GM12878 (cell line): ENCODE measurements at regions of chr5 and their contacts with region 1.

Region 1: DNA sequence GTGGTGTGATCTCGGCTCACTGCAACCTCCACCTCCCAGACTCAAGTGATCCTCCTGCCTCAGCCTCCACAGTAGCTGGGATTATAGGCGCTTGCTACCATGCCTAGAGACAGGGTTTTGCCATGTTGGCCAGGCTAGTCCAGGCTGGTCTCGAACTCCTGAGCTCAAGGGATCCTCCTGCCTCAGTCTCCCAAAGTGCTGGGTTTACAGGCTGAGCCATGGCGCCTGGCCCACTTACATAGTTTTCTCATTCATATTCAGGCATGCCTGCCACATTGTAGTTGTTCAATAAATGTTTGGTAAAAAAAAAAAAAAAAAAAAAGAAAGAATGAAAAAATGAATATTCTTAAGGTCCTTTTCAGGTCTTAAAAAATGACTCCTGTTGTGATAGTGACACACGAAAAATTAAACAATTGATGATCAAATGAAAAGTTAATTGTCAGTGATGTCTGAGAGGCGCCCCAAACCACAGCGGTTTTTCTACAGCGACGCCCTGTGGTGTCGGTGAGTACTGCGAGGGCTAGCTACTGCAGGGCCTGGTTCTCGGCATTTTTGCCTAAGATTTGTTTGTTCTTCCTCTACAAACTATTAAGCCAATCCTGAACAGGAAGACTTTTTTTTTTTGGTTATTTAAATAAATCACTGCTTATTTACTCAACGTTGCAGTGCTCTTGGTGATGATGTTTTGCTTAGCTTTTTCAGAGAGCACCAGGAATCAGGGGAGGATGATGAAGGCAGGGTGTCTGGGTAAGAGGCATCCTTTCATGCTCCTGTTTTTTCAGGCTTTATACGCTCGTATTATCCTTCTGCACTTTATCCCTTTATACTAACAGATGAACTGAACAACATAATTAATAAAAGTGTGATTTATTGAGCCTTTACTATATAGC is 67.0 kb upstream of the DPYSL3 start:
- DNase-seq: no peak
- ATAC-seq: peak; percentile 89
- H3K4me3 ChIP-seq: no peak overlapping the region
- H3K27ac ChIP-seq: no peak overlapping the region
- H3K4me1 ChIP-seq: no peaks in the 10 kb centered on the region
- H3K27me3 ChIP-seq: no peaks in the 10 kb centered on the region
- CTCF ChIP-seq: peak; percentile 75 to 81 (median 81)
- EP300 ChIP-seq: no peak
- POLR2A ChIP-seq: no peak
- RAD21 ChIP-seq: peak; percentile 50; the same call in 1 of the 2 replicates

Region 2: GRCh38 chr5:147216552-147217154 is 360.2 kb before region 1 on chr5:
- CTCF ChIA-PET with region 1: no interaction called
- POLR2A ChIA-PET with region 1: no interaction called
- RAD21 ChIA-PET with region 1: no interaction called
- SMC1A ChIA-PET with region 1: no interaction called
- in situ Hi-C with region 1: loop called (anchors 10 kb)
- intact Hi-C with region 1: loop called (anchors 5 kb)
- DNase-seq: no peak
- ATAC-seq: no peak
- H3K4me3 ChIP-seq: no peak overlapping the region
- H3K27ac ChIP-seq: no peak overlapping the region
- H3K4me1 ChIP-seq: no peaks in the 10 kb centered on the region
- H3K27me3 ChIP-seq: no peaks in the 10 kb centered on the region; a peak in 1 of 4 replicates
- CTCF ChIP-seq: no peak
- EP300 ChIP-seq: no peak
- POLR2A ChIP-seq: no peak
- RAD21 ChIP-seq: no peak

Region 3: GRCh38 chr5:147223948-147224791 is 352.7 kb before region 1 on chr5:
- CTCF ChIA-PET with region 1: interaction called, 12 read pairs
- POLR2A ChIA-PET with region 1: no interaction called
- RAD21 ChIA-PET with region 1: interaction called, 3 read pairs
- SMC1A ChIA-PET with region 1: interaction called, 3 read pairs
- in situ Hi-C with region 1: loop called (anchors 10 kb)
- intact Hi-C with region 1: loop called (anchors 5 kb)
- DNase-seq: no peak
- ATAC-seq: peak; percentile 86
- H3K4me3 ChIP-seq: no peak overlapping the region
- H3K27ac ChIP-seq: no peak overlapping the region
- H3K4me1 ChIP-seq: no peaks in the 10 kb centered on the region
- H3K27me3 ChIP-seq: no peaks in the 10 kb centered on the region
- CTCF ChIP-seq: peak; percentile 36 to 58 (median 39); a peak in 5 of 6 replicates
- EP300 ChIP-seq: no peak
- POLR2A ChIP-seq: no peak
- RAD21 ChIP-seq: peak; percentile 56

Region 4: DNA sequence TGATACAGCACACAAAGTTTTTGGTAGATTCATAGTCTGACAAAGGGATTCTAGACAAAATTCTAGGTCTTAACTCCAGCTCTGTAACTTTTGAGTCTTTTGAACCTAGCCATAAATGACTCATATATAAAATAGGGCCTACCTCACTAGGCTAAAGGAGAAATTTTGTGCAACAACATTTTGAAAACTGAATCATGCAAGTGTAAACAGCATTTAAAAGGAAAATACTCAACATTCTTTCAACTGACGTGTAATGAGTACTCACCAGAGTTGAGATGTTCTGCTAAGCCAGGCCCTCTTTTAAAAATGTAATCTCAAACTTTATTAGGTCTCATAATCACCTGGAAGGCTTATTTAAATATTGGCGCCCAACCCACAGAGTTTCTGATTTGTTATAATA is 228.8 kb before region 1 on chr5:
- CTCF ChIA-PET with region 1: no interaction called
- POLR2A ChIA-PET with region 1: no interaction called
- RAD21 ChIA-PET with region 1: no interaction called
- SMC1A ChIA-PET with region 1: no interaction called
- in situ Hi-C with region 1: no loop called
- intact Hi-C with region 1: no loop called
- DNase-seq: no peak
- ATAC-seq: no peak
- H3K4me3 ChIP-seq: no peak overlapping the region
- H3K27ac ChIP-seq: no peak overlapping the region
- H3K4me1 ChIP-seq: no peaks in the 10 kb centered on the region
- H3K27me3 ChIP-seq: no peaks in the 10 kb centered on the region
- CTCF ChIP-seq: no peak
- EP300 ChIP-seq: no peak
- POLR2A ChIP-seq: no peak
- RAD21 ChIP-seq: no peak

Region 5: GRCh38 chr5:147391781-147392180 is 185.1 kb before region 1 on chr5:
- CTCF ChIA-PET with region 1: interaction called, 11 read pairs
- POLR2A ChIA-PET with region 1: no interaction called
- RAD21 ChIA-PET with region 1: no interaction called
- SMC1A ChIA-PET with region 1: interaction called, 4 read pairs
- in situ Hi-C with region 1: no loop called
- intact Hi-C with region 1: no loop called
- DNase-seq: no peak
- ATAC-seq: peak; percentile 97
- H3K4me3 ChIP-seq: no peak overlapping the region
- H3K27ac ChIP-seq: no peak overlapping the region
- H3K4me1 ChIP-seq: no peaks in the 10 kb centered on the region
- H3K27me3 ChIP-seq: peaks cover 0 to 3% of the 10 kb centered on the region in 2 experiments; a peak in 3 of 4 replicates
- CTCF ChIP-seq: peak; percentile 45 to 59 (median 53); a peak in 5 of 6 replicates
- EP300 ChIP-seq: no peak
- POLR2A ChIP-seq: no peak
- RAD21 ChIP-seq: peak; percentile 40

Region 6: DNA sequence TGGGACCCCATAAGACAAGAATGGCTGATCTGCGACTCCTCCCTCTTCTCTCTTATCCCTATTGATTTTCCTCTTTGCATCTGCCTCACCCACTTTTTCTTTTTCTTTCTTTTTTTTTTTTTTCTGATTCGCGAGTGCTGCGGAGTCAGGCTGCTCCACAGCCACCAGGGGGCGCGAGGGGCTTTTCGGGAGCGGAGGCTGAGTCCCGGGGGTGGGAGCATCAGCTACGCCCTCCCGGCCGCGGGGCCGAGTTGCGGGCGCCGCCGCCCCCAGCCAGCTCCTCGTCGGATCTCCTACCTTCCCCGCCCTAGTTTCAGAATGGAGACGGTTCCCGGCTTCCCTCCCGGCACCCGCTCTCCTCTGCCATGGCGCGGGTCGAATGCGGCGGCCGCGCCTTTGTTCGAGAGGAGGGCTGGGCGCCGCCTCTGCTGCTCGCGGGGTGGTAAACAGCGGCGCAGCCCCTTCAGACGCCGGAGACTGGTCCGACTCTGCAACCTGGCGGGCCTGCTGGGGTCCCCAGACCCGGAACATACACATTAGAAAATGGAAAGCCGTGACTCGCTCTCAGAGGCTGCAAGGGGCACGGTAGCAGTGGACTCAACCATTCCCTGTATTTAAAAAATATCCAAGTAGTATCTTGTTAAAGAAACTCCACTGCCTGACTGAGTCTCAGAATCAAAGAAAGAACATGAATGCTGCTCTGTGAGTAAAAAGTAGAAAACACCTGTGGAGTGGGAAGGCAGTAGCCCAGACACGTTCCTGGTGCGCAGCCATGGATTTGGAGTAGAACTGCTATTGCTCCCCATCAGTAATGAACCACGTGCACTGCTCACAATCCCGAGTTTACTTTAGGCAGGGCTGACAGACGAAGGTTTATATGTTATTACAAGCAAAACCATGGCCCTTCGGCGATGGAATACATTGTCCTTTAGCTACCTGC is 122.7 kb before region 1 on chr5:
- CTCF ChIA-PET with region 1: interaction called, 36 read pairs
- POLR2A ChIA-PET with region 1: no interaction called
- RAD21 ChIA-PET with region 1: interaction called, 6 read pairs
- SMC1A ChIA-PET with region 1: interaction called, 4 read pairs
- in situ Hi-C with region 1: no loop called
- intact Hi-C with region 1: loop called (anchors 2 kb)
- DNase-seq: no peak
- ATAC-seq: peak; percentile 84
- H3K4me3 ChIP-seq: peak overlapping the region; percentile 64
- H3K27ac ChIP-seq: no peak overlapping the region
- H3K4me1 ChIP-seq: no peaks in the 10 kb centered on the region
- H3K27me3 ChIP-seq: peaks cover 4 to 14% of the 10 kb centered on the region in 2 experiments
- CTCF ChIP-seq: peak; percentile 70 to 82 (median 79)
- EP300 ChIP-seq: no peak
- POLR2A ChIP-seq: no peak
- RAD21 ChIP-seq: peak; percentile 71

Region 7: DNA sequence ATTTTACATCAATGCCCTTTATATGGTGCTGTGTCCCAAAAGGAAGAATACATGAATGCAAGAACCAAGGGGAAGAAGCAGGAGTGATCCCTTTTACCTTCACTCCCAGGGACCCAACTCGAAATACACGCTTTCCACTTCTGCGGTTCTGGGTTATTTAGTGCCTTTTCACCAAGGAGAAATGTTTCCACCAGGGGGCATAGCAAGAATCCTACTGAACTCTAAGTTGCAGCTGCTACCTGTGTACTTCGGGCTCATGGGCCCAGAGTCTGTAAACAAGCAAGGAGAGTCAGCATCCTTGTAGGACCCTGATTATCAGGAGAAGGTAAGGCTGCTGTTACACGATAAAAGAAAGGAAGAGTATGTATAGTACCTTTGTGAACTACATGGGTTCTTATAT is 112.7 kb before region 1 on chr5:
- CTCF ChIA-PET with region 1: interaction called, 44 read pairs
- POLR2A ChIA-PET with region 1: no interaction called
- RAD21 ChIA-PET with region 1: interaction called, 7 read pairs
- SMC1A ChIA-PET with region 1: interaction called, 22 read pairs
- in situ Hi-C with region 1: no loop called
- intact Hi-C with region 1: no loop called
- DNase-seq: no peak
- ATAC-seq: peak; percentile 93
- H3K4me3 ChIP-seq: no peak overlapping the region
- H3K27ac ChIP-seq: no peak overlapping the region
- H3K4me1 ChIP-seq: no peaks in the 10 kb centered on the region
- H3K27me3 ChIP-seq: no peaks in the 10 kb centered on the region
- CTCF ChIP-seq: peak in 2 of 3 experiments; percentile 31 to 37; a peak in 3 of 6 replicates
- EP300 ChIP-seq: no peak
- POLR2A ChIP-seq: no peak
- RAD21 ChIP-seq: peak; percentile 61; the same call in 1 of the 2 replicates

Region 8: GRCh38 chr5:147547730-147548129 is 29.2 kb before region 1 on chr5:
- CTCF ChIA-PET with region 1: no interaction called
- POLR2A ChIA-PET with region 1: no interaction called
- RAD21 ChIA-PET with region 1: no interaction called
- SMC1A ChIA-PET with region 1: no interaction called
- in situ Hi-C with region 1: no loop called
- intact Hi-C with region 1: no loop called
- DNase-seq: no peak
- ATAC-seq: no peak
- H3K4me3 ChIP-seq: no peak overlapping the region
- H3K27ac ChIP-seq: no peak overlapping the region
- H3K4me1 ChIP-seq: no peaks in the 10 kb centered on the region
- H3K27me3 ChIP-seq: no peaks in the 10 kb centered on the region
- CTCF ChIP-seq: no peak
- EP300 ChIP-seq: no peak
- POLR2A ChIP-seq: no peak
- RAD21 ChIP-seq: no peak

Region 9: DNA sequence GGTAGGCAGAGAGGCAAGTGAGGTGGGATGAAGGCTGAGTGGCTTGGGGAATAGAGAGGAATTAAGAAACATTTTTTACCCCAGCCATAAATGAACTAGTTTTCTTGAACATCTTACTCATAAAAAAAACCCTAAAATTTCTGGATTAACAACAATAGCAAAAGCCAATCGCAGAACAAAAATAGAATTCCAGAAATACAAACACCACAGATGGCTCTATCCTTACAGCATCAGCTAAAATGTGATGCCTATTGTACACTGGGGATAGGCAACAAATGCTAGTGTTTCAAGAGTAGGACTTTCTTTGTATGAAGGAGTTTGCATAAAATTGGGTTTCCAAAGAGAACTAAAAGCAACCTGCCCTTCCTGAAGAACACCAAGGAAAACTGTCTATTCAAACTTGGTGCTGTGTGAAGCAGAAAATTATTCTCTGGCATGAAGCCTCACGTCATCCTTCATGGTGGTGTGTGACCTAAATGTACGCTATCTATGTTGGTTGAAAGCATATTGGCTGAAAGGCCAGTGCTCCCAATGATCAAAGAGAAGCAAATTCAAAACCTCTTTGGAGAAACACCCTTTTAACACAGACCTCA is 122.7 kb after region 1 on chr5:
- CTCF ChIA-PET with region 1: no interaction called
- POLR2A ChIA-PET with region 1: no interaction called
- RAD21 ChIA-PET with region 1: no interaction called
- SMC1A ChIA-PET with region 1: no interaction called
- in situ Hi-C with region 1: no loop called
- intact Hi-C with region 1: no loop called
- DNase-seq: no peak
- ATAC-seq: no peak
- H3K4me3 ChIP-seq: no peak overlapping the region
- H3K27ac ChIP-seq: no peak overlapping the region
- H3K4me1 ChIP-seq: no peaks in the 10 kb centered on the region
- H3K27me3 ChIP-seq: no peaks in the 10 kb centered on the region
- CTCF ChIP-seq: no peak
- EP300 ChIP-seq: no peak
- POLR2A ChIP-seq: no peak
- RAD21 ChIP-seq: no peak